ENCODE measurements at regions of chr17 and their contacts with region 1.

Region 1: GRCh38 chr17:7989781-7990655 is 12.4 kb upstream of the GUCY2D start:
- DNase-seq: peak; percentile 63
- ATAC-seq: peak; percentile 88
- H3K4me3 ChIP-seq: peak overlapping the region; percentile 44 to 60
- H3K27ac ChIP-seq: peak overlapping the region; percentile 57; the same call in 1 of the 2 replicates
- H3K4me1 ChIP-seq: peaks cover 10 to 29% of the 10 kb centered on the region in 2 experiments
- H3K27me3 ChIP-seq: no peaks in the 10 kb centered on the region
- CTCF ChIP-seq: peak; percentile 83 to 94 (median 90)
- POLR2A ChIP-seq: peak; percentile 78
- RAD21 ChIP-seq: peak; percentile 69

Region 2: GRCh38 chr17:7740481-7741001 is 249.5 kb before region 1 on chr17:
- CTCF ChIA-PET with region 1: interaction called, 14 read pairs
- POLR2A ChIA-PET with region 1: no interaction called
- RAD21 ChIA-PET with region 1: interaction called, 3 to 5 read pairs
- intact Hi-C with region 1: loop called (anchors 5 kb)
- DNase-seq: no peak
- ATAC-seq: no peak
- H3K4me3 ChIP-seq: no peak overlapping the region
- H3K27ac ChIP-seq: no peak overlapping the region
- H3K4me1 ChIP-seq: peaks cover 4 to 8% of the 10 kb centered on the region in 2 experiments; a peak in 3 of 4 replicates
- H3K27me3 ChIP-seq: no peaks in the 10 kb centered on the region
- CTCF ChIP-seq: no peak
- POLR2A ChIP-seq: no peak
- RAD21 ChIP-seq: no peak

Region 3: DNA sequence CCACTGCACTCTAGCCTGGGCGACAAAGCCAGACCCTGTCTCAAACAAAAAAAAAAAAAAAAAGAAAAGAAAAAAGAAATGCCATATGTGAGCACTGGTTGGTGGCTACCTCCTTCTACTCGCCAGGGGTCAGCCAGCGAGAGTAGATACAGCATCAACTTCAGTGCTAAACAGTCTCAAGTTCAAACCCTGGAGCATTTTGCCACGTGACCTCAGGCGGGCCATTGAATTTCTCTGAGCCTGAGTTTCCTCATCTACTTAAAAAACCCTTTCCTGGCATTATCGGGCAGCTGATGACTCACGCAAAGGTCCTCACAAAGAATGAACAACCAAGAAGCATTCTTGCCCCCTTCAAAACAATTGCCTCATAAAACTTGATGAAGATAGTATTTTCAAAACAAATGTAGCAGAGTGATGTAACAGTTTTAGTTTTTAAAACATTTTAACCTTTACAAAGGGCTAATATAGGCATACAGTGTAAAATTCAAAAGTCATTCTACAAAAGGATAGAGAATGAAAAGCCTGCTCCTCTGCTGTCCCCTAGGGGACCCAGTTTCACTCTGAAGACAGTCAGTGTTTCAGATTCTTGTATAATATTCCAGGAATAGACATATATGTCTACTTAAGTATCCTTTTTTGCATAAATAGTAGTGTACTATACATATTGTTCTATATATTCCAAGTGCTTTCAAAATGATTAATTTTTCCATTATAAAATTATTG is 244.1 kb before region 1 on chr17:
- CTCF ChIA-PET with region 1: interaction called, 14 read pairs
- POLR2A ChIA-PET with region 1: no interaction called
- RAD21 ChIA-PET with region 1: interaction called, 3 to 5 read pairs
- intact Hi-C with region 1: loop called (anchors 5 kb)
- DNase-seq: peak; percentile 73
- ATAC-seq: peak; percentile 74
- H3K4me3 ChIP-seq: peak overlapping the region in 1 of 2 experiments; percentile 14; a peak in 2 of 4 replicates
- H3K27ac ChIP-seq: peak overlapping the region; percentile 60
- H3K4me1 ChIP-seq: peaks cover 23 to 41% of the 10 kb centered on the region in 2 experiments
- H3K27me3 ChIP-seq: no peaks in the 10 kb centered on the region
- CTCF ChIP-seq: peak; percentile 28 to 43 (median 43); a peak in 5 of 6 replicates
- POLR2A ChIP-seq: no peak
- RAD21 ChIP-seq: peak; percentile 53

Region 4: DNA sequence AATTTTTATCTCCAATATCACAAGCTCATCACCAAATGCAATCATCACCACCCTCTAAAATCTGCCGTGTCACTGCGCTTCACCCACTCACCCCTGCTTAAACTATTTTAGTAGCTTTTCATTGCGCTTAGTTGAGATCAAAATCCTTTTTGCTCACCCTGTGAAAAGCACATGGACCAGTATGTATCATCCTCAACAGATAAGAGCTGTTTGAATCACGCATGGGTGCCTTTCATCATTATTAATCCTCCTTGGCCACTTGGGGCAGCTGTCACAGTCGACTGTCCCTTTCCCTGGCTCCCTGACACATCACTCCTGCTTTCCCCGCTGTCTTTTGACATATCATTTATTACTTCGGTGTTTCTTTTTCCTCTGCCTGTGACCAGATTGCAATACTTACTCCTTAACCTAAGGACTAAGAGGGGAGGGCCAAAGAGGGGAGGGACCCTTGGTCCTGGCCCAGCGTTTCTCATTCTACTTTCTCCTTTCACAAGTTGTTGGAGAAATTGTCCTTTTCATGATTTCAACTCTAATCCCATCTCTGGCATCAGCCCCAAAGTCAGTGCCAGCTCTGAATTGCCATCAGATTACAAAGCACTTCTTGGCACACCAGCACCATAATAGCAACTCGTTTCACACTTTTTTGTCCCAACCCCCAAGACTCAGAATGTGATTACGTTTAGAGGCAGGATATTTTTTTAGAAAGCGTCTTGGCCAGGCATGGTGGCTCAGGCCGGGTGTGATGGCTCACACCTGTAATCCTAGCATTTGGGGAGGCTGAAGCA is 164.6 kb before region 1 on chr17:
- CTCF ChIA-PET with region 1: interaction called, 6 read pairs
- POLR2A ChIA-PET with region 1: no interaction called
- RAD21 ChIA-PET with region 1: no interaction called
- intact Hi-C with region 1: loop called (anchors 2 kb)
- DNase-seq: no peak
- ATAC-seq: peak; percentile 72
- H3K4me3 ChIP-seq: no peak overlapping the region
- H3K27ac ChIP-seq: no peak overlapping the region
- H3K4me1 ChIP-seq: peaks cover 0 to 15% of the 10 kb centered on the region in 2 experiments; a peak in 2 of 4 replicates
- H3K27me3 ChIP-seq: no peaks in the 10 kb centered on the region
- CTCF ChIP-seq: peak in 2 of 3 experiments; percentile 36 to 43; a peak in 4 of 6 replicates
- POLR2A ChIP-seq: no peak
- RAD21 ChIP-seq: peak; percentile 27; the same call in 1 of the 2 replicates

Region 5: DNA sequence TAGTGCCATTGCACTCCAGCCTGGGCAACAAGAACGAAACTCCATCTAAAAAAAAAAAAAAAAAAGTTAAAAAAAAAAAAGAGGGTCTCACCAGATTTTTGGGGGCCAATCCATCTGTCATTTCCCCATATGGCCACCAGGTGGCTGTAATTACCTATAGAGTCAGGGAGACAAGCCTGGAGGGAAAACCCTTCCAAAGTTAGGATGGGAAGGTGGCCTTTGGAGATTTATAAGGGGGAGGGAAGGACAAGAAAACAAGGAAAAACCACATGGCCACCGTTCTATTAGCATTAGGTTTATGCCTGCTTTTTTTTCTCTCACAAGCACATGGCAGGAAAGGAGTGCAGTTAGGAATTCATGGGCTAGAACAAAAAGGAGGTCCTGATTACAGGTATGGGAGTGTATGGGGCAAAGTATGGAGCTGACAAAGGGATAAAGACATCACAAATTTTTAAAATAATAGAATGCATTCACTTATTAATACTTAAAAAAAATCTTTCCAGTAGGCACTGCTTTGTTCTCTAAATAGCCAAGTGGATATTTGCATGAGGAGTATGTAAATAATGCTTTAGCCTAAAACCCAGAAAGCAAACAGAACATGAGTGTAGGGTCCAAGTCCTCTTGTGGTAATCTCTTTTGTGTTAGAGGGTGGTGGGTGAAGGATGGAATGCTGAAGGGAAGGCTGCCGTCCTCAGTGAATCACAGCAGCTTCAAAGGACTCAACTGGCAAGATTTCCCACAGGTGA is 127.2 kb before region 1 on chr17:
- CTCF ChIA-PET with region 1: interaction called, 4 read pairs
- POLR2A ChIA-PET with region 1: interaction called, 3 read pairs
- RAD21 ChIA-PET with region 1: interaction called in 1 of 2 experiments, 5 read pairs
- intact Hi-C with region 1: loop called (anchors 1 kb)
- DNase-seq: no peak
- ATAC-seq: no peak
- H3K4me3 ChIP-seq: no peak overlapping the region
- H3K27ac ChIP-seq: no peak overlapping the region
- H3K4me1 ChIP-seq: peaks cover 6 to 24% of the 10 kb centered on the region in 2 experiments
- H3K27me3 ChIP-seq: no peaks in the 10 kb centered on the region
- CTCF ChIP-seq: peak; percentile 66 to 88 (median 74)
- POLR2A ChIP-seq: no peak
- RAD21 ChIP-seq: peak; percentile 89

Region 6: GRCh38 chr17:7912927-7913524 is 77.0 kb before region 1 on chr17:
- CTCF ChIA-PET with region 1: interaction called, 47 read pairs
- POLR2A ChIA-PET with region 1: no interaction called
- RAD21 ChIA-PET with region 1: interaction called in 1 of 2 experiments, 4 read pairs
- intact Hi-C with region 1: loop called (anchors 1 kb)
- DNase-seq: peak; percentile 81
- ATAC-seq: peak; percentile 83
- H3K4me3 ChIP-seq: no peak overlapping the region
- H3K27ac ChIP-seq: no peak overlapping the region
- H3K4me1 ChIP-seq: peaks cover 10 to 28% of the 10 kb centered on the region in 2 experiments; a peak in 3 of 4 replicates
- H3K27me3 ChIP-seq: no peaks in the 10 kb centered on the region
- CTCF ChIP-seq: peak; percentile 80 to 91 (median 86)
- POLR2A ChIP-seq: no peak
- RAD21 ChIP-seq: peak; percentile 92

Region 7: DNA sequence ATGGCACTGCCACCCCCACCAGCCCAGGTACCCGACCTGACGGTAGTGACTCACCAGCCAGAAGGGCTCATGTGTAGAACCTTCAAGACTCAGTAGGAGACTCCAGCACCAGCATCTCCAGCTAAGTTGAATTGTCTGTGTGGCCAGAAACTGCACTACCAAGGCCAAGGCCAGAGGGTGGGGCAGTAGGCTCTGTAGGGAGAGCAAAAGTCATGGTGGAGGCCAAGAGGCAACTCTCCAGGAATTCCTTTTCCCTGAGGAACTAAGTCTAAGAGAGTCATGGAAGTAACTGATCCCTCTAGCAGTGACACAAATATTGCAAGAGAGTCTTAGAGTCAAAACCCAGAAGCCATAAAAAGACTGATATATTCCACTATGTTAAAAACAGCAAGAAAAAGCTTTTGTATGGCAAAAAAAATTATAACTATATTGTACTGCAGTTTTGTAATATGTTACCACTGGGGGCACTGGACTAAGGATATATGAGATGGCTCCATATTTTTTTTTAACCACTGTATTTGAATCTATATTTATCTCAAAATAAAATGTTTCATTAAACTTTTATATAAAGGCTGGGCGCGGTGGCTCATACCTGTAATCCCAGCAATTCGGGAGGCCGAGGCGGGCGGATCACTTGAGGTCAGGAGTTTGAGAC is 17.8 kb before region 1 on chr17:
- CTCF ChIA-PET with region 1: interaction called, 14 read pairs
- POLR2A ChIA-PET with region 1: no interaction called
- RAD21 ChIA-PET with region 1: no interaction called
- intact Hi-C with region 1: no loop called
- DNase-seq: no peak
- ATAC-seq: peak; percentile 53
- H3K4me3 ChIP-seq: no peak overlapping the region
- H3K27ac ChIP-seq: no peak overlapping the region
- H3K4me1 ChIP-seq: no peaks in the 10 kb centered on the region
- H3K27me3 ChIP-seq: no peaks in the 10 kb centered on the region
- CTCF ChIP-seq: peak in 2 of 3 experiments; percentile 15 to 40; a peak in 3 of 6 replicates
- POLR2A ChIP-seq: no peak
- RAD21 ChIP-seq: no peak

Measured in HCT116 (cell line).